AG04449 (cell line): ENCODE measurements at regions of chrX and their contacts with region 1.

Region 1: GRCh38 chrX:100685284-100685996 is 41.4 kb downstream of the SRPX2 start:
- DNase-seq: peak; percentile 19
- H3K4me3 ChIP-seq: no peak overlapping the region
- CTCF ChIP-seq: peak; percentile 57

Region 2: GRCh38 chrX:100512471-100512870 is 173.0 kb before region 1 on chrX:
- CTCF ChIA-PET with region 1: interaction called, 10 read pairs
- POLR2A ChIA-PET with region 1: no interaction called
- DNase-seq: no peak
- H3K4me3 ChIP-seq: no peak overlapping the region
- CTCF ChIP-seq: peak; percentile 31

Region 3: DNA sequence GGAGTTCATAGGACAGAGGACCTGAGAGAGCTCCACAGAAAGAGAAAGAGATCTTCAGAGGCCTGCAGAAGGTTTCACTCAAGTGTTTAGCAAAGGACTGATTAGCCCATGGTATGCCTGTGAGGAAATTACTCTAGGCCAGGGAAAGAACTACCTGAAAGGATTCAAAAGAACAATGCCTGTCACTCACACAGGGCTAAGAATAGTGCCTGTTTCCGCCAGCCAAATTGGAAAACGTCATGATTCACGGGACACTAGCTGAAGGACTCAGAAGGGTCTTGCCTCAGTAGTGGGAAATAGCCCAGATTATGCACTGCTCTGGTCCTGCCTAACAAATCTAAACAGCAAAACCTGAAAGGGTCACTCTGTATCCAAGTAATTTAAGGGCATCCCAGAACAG is 25.4 kb after region 1 on chrX:
- CTCF ChIA-PET with region 1: interaction called, 18 read pairs
- POLR2A ChIA-PET with region 1: no interaction called
- DNase-seq: no peak
- H3K4me3 ChIP-seq: no peak overlapping the region
- CTCF ChIP-seq: no peak

Region 4: GRCh38 chrX:101430457-101431078 is 745.1 kb after region 1 on chrX:
- CTCF ChIA-PET with region 1: no interaction called
- POLR2A ChIA-PET with region 1: no interaction called
- DNase-seq: no peak
- H3K4me3 ChIP-seq: no peak overlapping the region
- CTCF ChIP-seq: no peak